Heart right ventricle (tissue), 16 donors: ENCODE measurements at regions of chr1 and their contacts with region 1.

Region 1: DNA sequence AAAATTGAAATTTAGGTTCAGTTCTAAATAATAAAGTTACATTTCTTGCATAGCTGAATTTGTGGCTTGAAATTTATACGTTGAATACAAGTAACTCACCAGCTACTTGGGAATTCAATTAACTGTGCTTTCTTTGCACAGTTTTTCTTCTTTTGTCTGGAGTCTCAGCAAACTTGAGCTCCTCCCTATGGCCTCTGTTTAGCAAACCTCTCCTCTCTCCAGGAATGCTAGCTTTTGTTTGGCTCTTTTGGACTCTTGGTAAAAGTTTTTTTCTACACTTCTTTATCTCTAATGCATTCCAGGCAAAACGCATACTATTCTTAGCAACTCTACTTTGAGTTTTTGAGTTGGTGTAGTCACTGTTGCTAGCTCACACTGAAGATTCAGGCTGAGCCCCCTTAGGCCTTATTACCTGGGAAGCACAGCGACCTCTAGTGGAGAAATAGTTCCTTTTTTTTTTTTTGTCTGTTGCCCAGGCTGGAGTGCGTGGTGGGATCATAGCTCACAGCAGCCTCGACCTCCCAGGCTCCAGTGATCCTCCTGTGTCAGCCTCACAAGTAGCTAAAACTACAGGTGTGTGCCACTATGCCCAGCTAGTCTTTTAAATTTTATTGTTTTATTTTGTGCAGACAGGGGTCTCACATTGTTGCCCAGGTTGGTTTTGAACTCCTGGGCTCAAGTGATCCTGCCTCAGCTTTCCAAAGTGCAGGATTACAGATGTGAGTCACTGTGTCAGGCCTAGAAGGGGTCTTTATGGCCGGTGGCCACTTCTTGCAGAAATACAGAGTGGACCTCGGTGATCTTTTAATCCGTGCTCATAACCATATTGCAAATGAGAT is 61.7 kb downstream of the CASQ2 start:
- DNase-seq: no peak
- ATAC-seq: peak in 7 of 8 donors; percentile 23 to 58 (median 43)
- H3K4me3 ChIP-seq: no peak overlapping the region
- H3K27ac ChIP-seq: peak overlapping the region in 3 of 10 donors; percentile 20 to 39 (median 35)
- H3K4me1 ChIP-seq: peaks cover 0 to 85% (median 40%) of the 10 kb centered on the region in 9 donors
- H3K27me3 ChIP-seq: no peaks in the 10 kb centered on the region
- CTCF ChIP-seq: peak; percentile 63 to 83 (median 78)

Region 2: DNA sequence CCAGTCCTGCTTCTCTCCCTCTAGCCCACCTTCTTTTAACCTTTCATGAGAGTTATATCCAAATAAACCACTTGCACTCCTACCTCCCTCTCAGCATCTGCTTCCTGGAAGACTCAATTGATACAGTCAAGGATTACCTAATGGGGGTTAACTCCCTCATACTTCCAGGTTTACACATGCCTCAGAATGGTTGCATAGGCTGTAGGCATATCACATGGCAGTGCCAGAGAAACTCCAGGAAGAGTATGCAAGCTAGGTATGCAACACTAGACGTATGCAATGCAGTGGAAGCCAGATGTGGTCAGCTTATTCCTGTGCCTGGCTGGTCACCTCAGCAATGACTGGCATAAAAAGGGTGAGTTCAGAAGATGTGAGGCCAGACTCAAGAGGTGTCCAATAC is 97.8 kb before region 1 on chr1:
- intact Hi-C with region 1: loop called in 9 of 10 experiments (anchors 2 to 5 kb)
- DNase-seq: no peak
- ATAC-seq: no peak
- H3K4me3 ChIP-seq: no peak overlapping the region
- H3K27ac ChIP-seq: no peak overlapping the region
- H3K4me1 ChIP-seq: peaks cover 0 to 9% (median 3%) of the 10 kb centered on the region in 9 donors
- H3K27me3 ChIP-seq: no peaks in the 10 kb centered on the region
- CTCF ChIP-seq: no peak

Region 3: DNA sequence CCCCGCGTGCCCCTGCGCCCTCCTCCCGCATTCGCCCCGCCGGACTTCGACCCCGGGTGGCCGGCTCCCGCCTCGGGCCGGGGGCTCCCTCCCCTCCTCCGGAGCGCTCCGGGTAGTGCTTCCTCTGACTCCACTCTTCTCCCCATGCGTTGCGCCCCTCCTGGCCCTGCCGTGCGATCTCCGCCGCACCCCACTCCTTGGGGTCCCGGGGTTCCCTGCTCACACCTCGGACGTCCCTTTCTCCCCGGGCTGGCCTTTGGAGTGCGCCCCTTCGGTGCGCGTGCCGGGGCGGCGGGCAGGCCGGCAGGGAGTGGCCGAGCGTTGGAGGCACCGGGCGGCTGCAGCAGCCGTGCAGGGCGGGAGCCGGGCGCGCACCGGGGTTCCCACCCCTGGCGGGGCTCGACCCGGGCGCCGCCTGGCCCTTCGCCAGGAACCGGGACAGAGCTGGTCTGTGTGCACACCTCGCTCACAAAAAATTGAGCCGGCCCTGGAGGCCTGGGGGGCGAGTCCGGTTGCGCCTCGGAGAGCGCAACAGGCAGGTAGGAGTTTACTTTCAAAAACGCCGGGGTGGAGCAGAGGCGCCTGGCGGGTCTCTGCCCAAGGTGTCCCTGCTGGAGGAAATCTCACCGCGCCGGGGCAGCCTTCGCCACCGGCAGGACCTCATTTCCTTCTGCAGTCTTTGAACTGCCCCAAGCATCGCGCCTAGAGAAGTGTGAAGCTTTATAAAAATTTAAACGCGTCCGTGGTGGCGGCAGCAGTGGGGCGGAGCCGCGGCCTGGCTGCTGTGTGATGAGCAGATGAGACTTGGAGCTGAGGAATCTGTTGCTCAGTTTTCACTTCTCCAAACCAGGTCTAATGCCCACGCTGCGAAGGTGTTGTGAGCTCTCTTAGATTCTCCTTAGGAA is 64.4 kb before region 1 on chr1:
- intact Hi-C with region 1: loop called in 2 of 10 experiments (anchors 5 to 10 kb)
- DNase-seq: peak; percentile 38 to 52
- ATAC-seq: peak; percentile 61 to 85 (median 72)
- H3K4me3 ChIP-seq: peak overlapping the region; percentile 80 to 98 (median 88)
- H3K27ac ChIP-seq: peak overlapping the region; percentile 45 to 91 (median 82)
- H3K4me1 ChIP-seq: peaks cover 0 to 38% (median 22%) of the 10 kb centered on the region in 9 donors
- H3K27me3 ChIP-seq: no peaks in the 10 kb centered on the region
- CTCF ChIP-seq: peak in 5 of 9 donors; percentile 15 to 48 (median 40)

Region 4: GRCh38 chr1:115669002-115669673 is 37.7 kb before region 1 on chr1:
- intact Hi-C with region 1: loop called in 1 of 10 experiments (anchors 5 kb)
- DNase-seq: no peak
- ATAC-seq: no peak
- H3K4me3 ChIP-seq: no peak overlapping the region
- H3K27ac ChIP-seq: peak overlapping the region in 1 of 10 donors; percentile 88
- H3K4me1 ChIP-seq: peaks cover 0 to 72% (median 24%) of the 10 kb centered on the region in 9 donors
- H3K27me3 ChIP-seq: no peaks in the 10 kb centered on the region
- CTCF ChIP-seq: no peak

Region 5: DNA sequence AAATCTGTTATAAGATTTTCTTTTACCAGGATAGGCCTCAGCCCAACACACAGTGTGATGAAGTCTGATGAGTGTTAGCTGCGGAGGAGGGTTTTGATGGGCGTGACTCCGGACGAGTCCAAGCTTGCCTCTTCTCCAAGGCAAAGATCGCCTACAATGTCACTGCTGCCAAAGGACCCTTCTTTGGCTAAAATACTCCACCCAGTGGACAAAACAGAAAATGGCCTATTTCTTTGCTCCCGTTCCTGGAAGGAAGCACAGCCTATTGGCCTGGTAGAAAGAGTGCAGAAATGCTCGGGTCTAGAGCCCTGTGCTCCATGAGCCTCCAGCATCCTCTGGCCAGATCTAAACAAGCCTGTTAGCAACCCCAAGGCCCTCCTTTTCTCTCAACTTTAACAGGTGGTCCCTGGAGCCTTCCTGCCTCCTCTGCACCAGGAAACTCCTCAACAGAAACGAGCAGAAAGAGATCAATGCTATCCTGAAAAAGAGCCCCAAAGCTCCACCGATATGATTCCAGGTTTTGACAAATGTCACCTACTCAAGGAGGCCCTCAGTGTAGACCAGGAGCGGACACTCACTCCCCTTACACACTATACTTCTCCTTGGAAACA is 65.1 kb after region 1 on chr1:
- intact Hi-C with region 1: loop called in 2 of 10 experiments (anchors 5 kb)
- DNase-seq: peak; percentile 37 to 77
- ATAC-seq: peak; percentile 73 to 87 (median 76)
- H3K4me3 ChIP-seq: peak overlapping the region in 6 of 10 donors; percentile 11 to 30 (median 15)
- H3K27ac ChIP-seq: peak overlapping the region in 9 of 10 donors; percentile 17 to 79 (median 68)
- H3K4me1 ChIP-seq: peaks cover 0 to 28% (median 7%) of the 10 kb centered on the region in 9 donors
- H3K27me3 ChIP-seq: peaks cover 0 to 7% (median 0%) of the 10 kb centered on the region in 7 donors
- CTCF ChIP-seq: peak; percentile 42 to 85 (median 75)

Region 6: GRCh38 chr1:115782571-115783281 is 75.9 kb after region 1 on chr1:
- intact Hi-C with region 1: no loop called
- DNase-seq: no peak
- ATAC-seq: peak in 6 of 8 donors; percentile 17 to 57 (median 52)
- H3K4me3 ChIP-seq: no peak overlapping the region
- H3K27ac ChIP-seq: no peak overlapping the region
- H3K4me1 ChIP-seq: peaks cover 0 to 12% (median 0%) of the 10 kb centered on the region in 9 donors
- H3K27me3 ChIP-seq: peaks cover 0 to 11% (median 0%) of the 10 kb centered on the region in 7 donors
- CTCF ChIP-seq: no peak

Region 7: GRCh38 chr1:115842948-115843347 is 136.1 kb after region 1 on chr1:
- intact Hi-C with region 1: no loop called
- DNase-seq: no peak
- ATAC-seq: no peak
- H3K4me3 ChIP-seq: no peak overlapping the region
- H3K27ac ChIP-seq: no peak overlapping the region
- H3K4me1 ChIP-seq: peaks cover 12 to 20% (median 19%) of the 10 kb centered on the region in 9 donors
- H3K27me3 ChIP-seq: peaks cover 21 to 96% (median 83%) of the 10 kb centered on the region in 7 donors
- CTCF ChIP-seq: no peak